Esophagus squamous epithelium (tissue), 5 donors: ENCODE measurements at regions of chr1 and their contacts with region 1.

Region 1: DNA sequence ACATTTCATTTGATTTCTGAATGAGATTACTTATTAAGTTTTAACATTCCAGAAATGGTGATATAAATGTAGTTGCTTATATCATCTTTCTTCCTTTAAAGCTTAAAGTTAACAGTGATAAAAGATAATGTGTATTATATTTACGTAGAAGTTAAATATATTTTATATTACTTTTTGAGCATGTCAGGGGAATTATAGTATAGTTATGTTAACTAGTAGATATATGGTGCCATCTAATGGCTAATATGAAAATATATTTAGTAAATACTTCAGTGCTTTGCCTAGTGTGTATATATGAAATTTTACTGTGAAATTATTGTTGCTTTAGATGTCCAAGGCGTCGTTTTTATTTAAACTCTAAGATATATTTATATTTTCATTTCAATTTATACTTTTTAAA is 51.5 kb downstream of the SYT14 start:
- DNase-seq: no peak
- H3K4me3 ChIP-seq: no peak overlapping the region
- H3K27ac ChIP-seq: no peak overlapping the region
- H3K4me1 ChIP-seq: no peaks in the 10 kb centered on the region
- H3K27me3 ChIP-seq: peaks cover 0 to 18% (median 0%) of the 10 kb centered on the region in 4 donors
- CTCF ChIP-seq: peak in 2 of 6 experiments; percentile 17 to 36
- POLR2A ChIP-seq: no peak

Region 2: GRCh38 chr1:209704584-209704983 is 284.9 kb before region 1 on chr1 and contains the start of gene HSD11B1:
- intact Hi-C with region 1: no loop called
- DNase-seq: no peak
- H3K4me3 ChIP-seq: peak within 1 kb of the TSS in 1 of 4 donors; percentile 29
- H3K27ac ChIP-seq: peak within 1 kb of the TSS in 2 of 4 donors; percentile 61 to 77
- H3K4me1 ChIP-seq: no peaks in the 10 kb centered on the region
- H3K27me3 ChIP-seq: no peaks in the 10 kb centered on the region
- CTCF ChIP-seq: no peak
- POLR2A ChIP-seq: no peak
- total RNA-seq, gene HSD11B1: 1.5 to 5.9 (median 4.0) TPM in 3 of 4 donors, not detected in the other

Region 3: GRCh38 chr1:209875515-209875914 is 114.0 kb before region 1 on chr1:
- intact Hi-C with region 1: loop called (anchors 10 kb)
- DNase-seq: no peak
- H3K4me3 ChIP-seq: no peak overlapping the region
- H3K27ac ChIP-seq: no peak overlapping the region
- H3K4me1 ChIP-seq: no peaks in the 10 kb centered on the region
- H3K27me3 ChIP-seq: peaks cover 0 to 28% (median 0%) of the 10 kb centered on the region in 4 donors
- CTCF ChIP-seq: peak in 1 of 6 experiments; percentile 19
- POLR2A ChIP-seq: no peak